MCF 10A (cell line): ENCODE measurements at regions of chr5 and their contacts with region 1.

Region 1: DNA sequence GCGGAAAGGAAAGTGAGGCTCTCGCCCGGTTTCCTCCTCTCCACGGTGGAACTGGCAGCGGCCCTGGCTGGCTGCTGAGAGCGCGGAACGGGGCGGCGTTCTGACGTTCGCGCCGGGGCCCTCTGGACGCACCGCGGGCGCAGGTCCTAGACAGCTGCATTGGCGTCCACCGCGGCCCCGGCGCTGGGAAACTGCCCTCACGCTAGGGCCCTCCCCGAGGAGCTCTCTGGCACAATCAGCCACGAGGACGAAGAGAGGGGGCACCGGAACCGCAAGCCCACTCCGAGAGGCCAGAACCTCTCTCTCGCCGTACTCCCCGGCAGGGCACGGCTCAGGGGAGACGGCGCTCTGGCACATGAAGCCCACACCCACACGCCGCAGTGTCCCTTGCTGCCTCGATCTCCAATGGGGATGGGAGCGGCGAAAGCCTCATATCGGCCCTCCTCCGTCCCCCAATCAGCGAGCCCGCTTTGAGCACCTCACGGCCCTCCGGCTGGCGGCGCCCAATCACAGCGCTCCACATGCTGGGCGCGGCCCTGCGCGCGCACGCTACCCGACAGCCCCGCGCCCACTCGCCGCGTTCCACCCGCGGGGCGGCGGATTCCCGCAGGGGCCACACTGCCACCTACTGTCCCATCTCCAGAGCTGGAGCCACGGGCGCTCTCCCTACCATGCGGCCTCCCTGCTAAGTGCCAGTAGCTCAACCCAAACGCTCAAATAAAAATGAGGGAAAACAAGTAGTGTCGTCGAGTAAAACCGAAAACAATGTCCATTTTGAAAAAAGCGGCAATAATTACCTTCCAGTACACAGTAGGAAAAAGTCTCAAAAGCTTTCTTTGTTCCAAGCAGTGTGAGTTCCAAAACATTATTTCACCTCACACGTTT is 11.8 kb downstream of the MRPS27 start:
- DNase-seq: peak; percentile 98
- H3K4me3 Mint-ChIP-seq: peak overlapping the region; percentile 87
- H3K27ac Mint-ChIP-seq: peak overlapping the region; percentile 95
- H3K4me1 Mint-ChIP-seq: peaks cover 9% of the 10 kb centered on the region
- H3K27me3 Mint-ChIP-seq: no peaks in the 10 kb centered on the region
- CTCF ChIP-seq: peak; percentile 79

Region 2: DNA sequence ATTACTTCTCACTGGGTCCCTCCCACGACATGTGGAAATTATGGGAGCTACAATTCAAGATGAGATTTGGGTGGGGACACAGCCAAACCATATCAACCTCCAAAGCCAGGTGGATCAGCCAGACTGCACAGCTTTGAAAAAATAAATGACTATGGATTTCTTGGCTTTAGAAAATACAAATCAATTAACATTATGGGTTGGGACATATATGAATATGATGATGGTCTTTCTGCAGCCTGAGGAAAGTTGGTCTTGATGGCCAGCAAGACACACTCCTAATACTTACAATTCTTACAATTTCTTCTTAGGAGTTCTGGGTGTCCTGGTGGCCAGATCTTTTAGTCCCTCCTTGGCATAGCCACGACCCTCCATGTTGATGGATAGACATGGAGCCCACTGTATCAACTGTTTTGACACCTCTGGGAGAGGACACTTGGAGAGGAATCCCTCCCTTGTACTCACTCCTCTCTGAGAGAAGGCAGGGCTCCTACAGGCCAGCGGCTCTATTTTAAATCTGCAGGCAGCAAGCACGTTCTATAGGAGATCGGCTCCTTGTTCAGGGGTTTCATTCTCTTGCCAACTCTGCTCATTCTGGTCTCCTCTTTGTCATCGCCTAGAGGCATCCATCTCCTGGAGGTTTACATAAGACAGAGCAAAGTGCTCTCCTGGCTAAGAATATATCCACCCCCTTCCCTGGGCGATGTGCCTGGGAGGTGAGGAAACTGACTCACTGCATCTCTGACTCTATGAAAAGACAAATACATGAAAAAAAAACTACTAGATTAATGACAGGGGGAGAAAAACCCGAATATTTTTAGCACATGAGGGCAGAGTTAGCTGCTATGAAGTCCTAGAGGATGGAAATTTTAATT is 443.2 kb before region 1 on chr5:
- CTCF ChIA-PET with region 1: no interaction called
- POLR2A ChIA-PET with region 1: no interaction called
- intact Hi-C with region 1: loop called (anchors 1 kb)
- DNase-seq: peak; percentile 91
- H3K4me3 Mint-ChIP-seq: no peak overlapping the region
- H3K27ac Mint-ChIP-seq: peak overlapping the region; percentile 14
- H3K4me1 Mint-ChIP-seq: peaks cover 20% of the 10 kb centered on the region
- H3K27me3 Mint-ChIP-seq: no peaks in the 10 kb centered on the region
- CTCF ChIP-seq: no peak

Region 3: GRCh38 chr5:71986101-71986500 is 322.1 kb before region 1 on chr5:
- CTCF ChIA-PET with region 1: no interaction called
- POLR2A ChIA-PET with region 1: no interaction called
- intact Hi-C with region 1: no loop called
- DNase-seq: no peak
- H3K4me3 Mint-ChIP-seq: no peak overlapping the region
- H3K27ac Mint-ChIP-seq: no peak overlapping the region
- H3K4me1 Mint-ChIP-seq: no peaks in the 10 kb centered on the region
- H3K27me3 Mint-ChIP-seq: peaks cover 6% of the 10 kb centered on the region
- CTCF ChIP-seq: no peak

Region 4: GRCh38 chr5:72138943-72139521 is 169.2 kb before region 1 on chr5:
- CTCF ChIA-PET with region 1: interaction called, 5 read pairs
- POLR2A ChIA-PET with region 1: interaction called, 4 read pairs
- intact Hi-C with region 1: loop called (anchors 1 kb)
- DNase-seq: peak; percentile 51
- H3K4me3 Mint-ChIP-seq: no peak overlapping the region
- H3K27ac Mint-ChIP-seq: no peak overlapping the region
- H3K4me1 Mint-ChIP-seq: peaks cover 33% of the 10 kb centered on the region
- H3K27me3 Mint-ChIP-seq: no peaks in the 10 kb centered on the region
- CTCF ChIP-seq: no peak

Region 5: GRCh38 chr5:72319976-72320752 is 12.0 kb after region 1 on chr5 and contains the starts of genes MRPS27 and PTCD2:
- CTCF ChIA-PET with region 1: interaction called, 20 read pairs
- POLR2A ChIA-PET with region 1: interaction called, 84 read pairs
- intact Hi-C with region 1: no loop called
- DNase-seq: peak; percentile 98
- H3K4me3 Mint-ChIP-seq: peak within 1 kb of the TSS; percentile 96
- H3K27ac Mint-ChIP-seq: peak within 1 kb of the TSS; percentile 87
- H3K4me1 Mint-ChIP-seq: peaks cover 19% of the 10 kb centered on the region
- H3K27me3 Mint-ChIP-seq: no peaks in the 10 kb centered on the region
- CTCF ChIP-seq: no peak
- total RNA-seq, gene MRPS27: 60.8 and 68.5 TPM in 2 replicates
- total RNA-seq, gene PTCD2: 20.3 and 20.6 TPM in 2 replicates

Region 6: DNA sequence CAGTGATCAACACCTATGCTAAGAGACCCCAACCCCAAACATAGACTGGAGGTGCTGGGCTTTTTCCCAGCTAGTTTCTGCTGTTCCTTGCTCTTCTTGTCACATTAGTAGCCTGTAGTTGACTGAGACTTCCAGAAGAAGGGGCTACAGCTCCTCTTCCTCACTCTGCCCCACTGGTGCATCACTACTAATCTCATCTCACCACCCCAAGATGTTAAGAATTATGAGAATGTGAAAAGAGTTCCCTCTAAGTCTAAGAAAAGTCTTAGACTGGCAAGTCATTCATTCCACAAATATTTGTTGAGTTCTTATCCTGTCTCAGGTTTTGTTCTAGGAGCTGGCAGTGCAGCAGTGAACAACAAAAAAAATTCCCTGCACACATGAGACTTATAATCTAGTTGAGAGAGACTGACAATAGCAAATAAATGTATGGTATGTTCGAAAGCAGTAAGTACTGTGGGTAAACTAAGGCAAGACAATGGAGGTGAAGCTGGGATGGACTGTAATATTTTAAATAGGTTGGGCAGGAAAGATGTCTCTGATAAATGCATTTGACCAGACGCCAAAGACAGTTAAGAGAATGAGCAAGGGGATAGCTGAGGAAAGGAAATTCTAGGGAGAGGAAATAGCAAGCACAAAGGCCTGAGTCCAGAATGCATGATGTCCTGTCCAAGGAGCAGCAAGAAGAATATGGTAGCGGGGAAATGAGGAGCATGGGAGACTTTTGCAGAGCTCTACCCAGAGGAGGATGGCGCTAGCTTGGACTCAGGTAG is 104.3 kb after region 1 on chr5:
- CTCF ChIA-PET with region 1: no interaction called
- POLR2A ChIA-PET with region 1: no interaction called
- intact Hi-C with region 1: no loop called
- DNase-seq: no peak
- H3K4me3 Mint-ChIP-seq: no peak overlapping the region
- H3K27ac Mint-ChIP-seq: no peak overlapping the region
- H3K4me1 Mint-ChIP-seq: peaks cover 10% of the 10 kb centered on the region
- H3K27me3 Mint-ChIP-seq: no peaks in the 10 kb centered on the region
- CTCF ChIP-seq: no peak